A549 (cell line): ENCODE measurements at regions of chr15 and their contacts with region 1.

Region 1: DNA sequence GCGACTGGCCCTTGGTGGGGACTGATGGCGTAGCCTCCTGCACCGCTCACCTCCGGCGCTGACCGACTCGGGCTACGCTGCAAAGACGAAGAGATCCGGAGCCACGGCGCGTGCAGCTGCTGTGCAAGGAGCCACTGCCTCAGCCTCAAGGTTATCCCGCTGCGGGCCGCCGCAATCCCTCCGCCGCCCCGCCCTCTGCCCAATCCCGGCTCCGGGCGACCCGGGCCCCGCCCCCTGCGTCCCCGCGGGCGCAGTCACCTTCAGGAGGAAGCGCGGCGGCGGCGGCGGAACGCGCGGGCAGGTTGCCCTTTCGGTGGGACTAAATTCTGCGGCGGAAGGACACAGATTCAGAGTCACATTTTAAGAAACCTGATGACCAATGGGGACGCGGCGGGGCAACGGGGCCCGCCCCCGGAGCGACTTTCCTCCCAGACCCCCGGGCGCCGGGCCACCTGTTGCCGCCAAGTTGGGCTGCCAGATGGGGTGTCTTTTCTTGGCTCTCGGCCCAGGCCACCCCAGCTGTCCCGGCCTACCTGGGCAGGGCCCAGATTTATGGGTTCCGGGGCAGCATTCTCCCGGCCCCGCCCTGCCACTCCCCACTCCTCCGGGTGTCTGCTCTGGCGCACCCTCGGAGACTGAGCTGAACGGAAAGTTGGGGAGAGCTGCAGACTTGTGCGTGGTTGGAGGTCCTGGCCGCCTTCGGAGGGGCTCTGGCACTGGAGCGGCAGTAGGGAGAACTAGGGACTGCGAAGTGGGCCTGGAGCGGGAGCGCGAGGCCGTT is at the start of gene PKM:
- DNase-seq: peak; percentile 93 to 100
- ATAC-seq: peak; percentile 60 to 75
- H3K4me3 ChIP-seq: peak within 1 kb of the TSS; percentile 91
- H3K27ac ChIP-seq: peak within 1 kb of the TSS; percentile 97
- H3K4me1 ChIP-seq: peaks cover 53% of the 10 kb centered on the region
- CTCF ChIP-seq: no peak
- EP300 ChIP-seq: peak; percentile 11 to 57; a peak in 1 of 5 replicates
- POLR2A ChIP-seq: peak; percentile 100
- RAD21 ChIP-seq: no peak; a peak in 1 of 5 replicates
- polyA plus RNA-seq, gene PKM: 2,741 and 3,443 TPM in 2 replicates

Region 2: DNA sequence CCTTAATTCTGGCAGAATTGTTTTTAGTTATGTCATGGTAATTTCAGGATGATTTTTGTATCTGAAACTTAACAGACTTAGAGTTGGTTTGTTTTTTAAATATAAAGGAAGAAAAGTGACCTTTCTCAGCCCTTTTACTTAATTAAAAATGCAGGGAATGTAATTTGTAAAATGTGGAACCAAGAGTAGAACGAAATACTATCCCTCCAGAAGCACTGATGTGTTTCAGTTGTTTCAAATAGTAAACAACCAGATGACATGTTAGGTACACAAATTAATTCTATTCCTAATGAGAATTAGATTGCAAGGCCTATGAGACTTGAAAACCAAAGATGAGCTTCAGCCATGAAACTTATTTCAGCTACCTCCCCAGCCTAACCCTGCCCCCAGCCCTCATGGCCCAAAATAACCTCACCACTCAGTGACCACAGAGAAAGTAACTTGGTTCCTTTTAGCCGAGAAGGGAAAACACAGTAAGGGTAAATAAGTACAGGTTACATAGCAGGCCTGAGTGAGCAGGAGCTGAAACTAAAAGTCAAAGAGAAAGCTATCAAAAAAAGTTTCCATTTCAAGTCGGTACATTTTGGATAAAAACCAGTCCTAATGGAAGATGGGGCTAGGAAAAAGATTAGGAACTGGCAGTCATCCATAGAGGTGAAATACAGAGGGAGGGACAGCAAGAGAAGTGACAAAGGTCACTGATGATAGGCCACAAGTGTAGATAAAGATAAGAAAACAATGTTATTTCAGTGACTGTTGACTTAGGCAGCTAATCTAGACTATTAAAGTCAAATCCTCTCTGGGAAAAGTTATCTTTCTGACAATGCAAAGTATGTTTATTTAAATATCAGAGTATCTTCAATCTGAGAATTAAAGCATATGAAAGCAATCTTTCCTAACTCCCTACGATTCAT is 89.8 kb before region 1 on chr15:
- CTCF ChIA-PET with region 1: no interaction called
- POLR2A ChIA-PET with region 1: no interaction called
- DNase-seq: no peak
- ATAC-seq: no peak; a peak in 1 of 6 replicates
- H3K4me3 ChIP-seq: no peak overlapping the region
- H3K27ac ChIP-seq: no peak overlapping the region
- H3K4me1 ChIP-seq: peaks cover 16% of the 10 kb centered on the region
- CTCF ChIP-seq: no peak
- EP300 ChIP-seq: no peak
- POLR2A ChIP-seq: no peak
- RAD21 ChIP-seq: no peak

Region 3: DNA sequence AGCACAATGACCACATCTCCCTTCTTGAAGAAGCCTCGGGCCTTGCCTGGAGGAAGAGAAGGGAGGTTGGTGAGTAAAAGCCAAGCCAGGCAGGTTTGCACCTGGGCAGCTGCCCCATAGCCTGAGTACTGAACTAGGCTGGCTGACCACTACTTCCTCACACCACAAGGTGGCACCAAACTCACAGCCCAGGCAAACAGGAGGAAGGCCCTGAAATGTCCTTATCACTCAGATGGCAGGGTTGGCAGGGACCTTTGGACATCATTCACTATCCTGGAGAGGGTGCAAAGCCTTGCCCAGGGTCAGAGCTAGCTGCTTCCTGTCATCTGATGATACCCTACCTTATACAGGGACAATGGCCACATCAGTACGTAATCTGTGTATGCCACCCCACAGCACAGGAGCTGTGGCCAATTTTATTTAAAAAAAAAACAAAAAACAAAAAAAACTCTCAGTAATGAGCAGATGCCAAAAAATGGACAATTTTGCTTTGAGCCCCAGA is 31.5 kb before region 1 on chr15:
- CTCF ChIA-PET with region 1: interaction called, 644 read pairs
- POLR2A ChIA-PET with region 1: interaction called, 40 read pairs
- DNase-seq: peak; percentile 89 to 93
- ATAC-seq: peak; percentile 33 to 68
- H3K4me3 ChIP-seq: no peak overlapping the region
- H3K27ac ChIP-seq: peak overlapping the region in 1 of 2 experiments; percentile 26; a peak in 3 of 6 replicates
- H3K4me1 ChIP-seq: peaks cover 54% of the 10 kb centered on the region
- CTCF ChIP-seq: peak; percentile 94
- EP300 ChIP-seq: no peak
- POLR2A ChIP-seq: no peak
- RAD21 ChIP-seq: peak; percentile 92 to 94

Region 4: GRCh38 chr15:72206677-72207000 is 24.6 kb before region 1 on chr15:
- CTCF ChIA-PET with region 1: interaction called, 644 read pairs
- POLR2A ChIA-PET with region 1: interaction called, 40 read pairs
- DNase-seq: no peak
- ATAC-seq: peak in 1 of 2 experiments; percentile 34; a peak in 3 of 6 replicates
- H3K4me3 ChIP-seq: no peak overlapping the region
- H3K27ac ChIP-seq: no peak overlapping the region
- H3K4me1 ChIP-seq: peaks cover 64% of the 10 kb centered on the region
- CTCF ChIP-seq: no peak
- EP300 ChIP-seq: no peak
- POLR2A ChIP-seq: no peak
- RAD21 ChIP-seq: no peak

Region 5: GRCh38 chr15:72242775-72243370 is 11.6 kb after region 1 on chr15:
- CTCF ChIA-PET with region 1: interaction called, 52 read pairs
- POLR2A ChIA-PET with region 1: interaction called, 48 read pairs
- DNase-seq: no peak
- ATAC-seq: no peak
- H3K4me3 ChIP-seq: no peak overlapping the region
- H3K27ac ChIP-seq: no peak overlapping the region
- H3K4me1 ChIP-seq: peaks cover 10% of the 10 kb centered on the region
- CTCF ChIP-seq: no peak
- EP300 ChIP-seq: no peak
- POLR2A ChIP-seq: no peak
- RAD21 ChIP-seq: no peak

Region 6: GRCh38 chr15:72339777-72340177 is 108.5 kb after region 1 on chr15:
- CTCF ChIA-PET with region 1: interaction called, 3 read pairs
- POLR2A ChIA-PET with region 1: interaction called, 10 read pairs
- DNase-seq: peak; percentile 72 to 89
- ATAC-seq: peak; percentile 91 to 95
- H3K4me3 ChIP-seq: no peak overlapping the region
- H3K27ac ChIP-seq: peak overlapping the region; percentile 83 to 84
- H3K4me1 ChIP-seq: peaks cover 34% of the 10 kb centered on the region
- CTCF ChIP-seq: no peak
- EP300 ChIP-seq: peak in 1 of 2 experiments; percentile 41; a peak in 1 of 5 replicates
- POLR2A ChIP-seq: no peak
- RAD21 ChIP-seq: 0 out of 5 replicates have a peak, but pooled peaks of 1 of the 2 experiments have one; percentile 18